ENCODE measurements at regions of chr11 and their contacts with region 1.

Region 1: DNA sequence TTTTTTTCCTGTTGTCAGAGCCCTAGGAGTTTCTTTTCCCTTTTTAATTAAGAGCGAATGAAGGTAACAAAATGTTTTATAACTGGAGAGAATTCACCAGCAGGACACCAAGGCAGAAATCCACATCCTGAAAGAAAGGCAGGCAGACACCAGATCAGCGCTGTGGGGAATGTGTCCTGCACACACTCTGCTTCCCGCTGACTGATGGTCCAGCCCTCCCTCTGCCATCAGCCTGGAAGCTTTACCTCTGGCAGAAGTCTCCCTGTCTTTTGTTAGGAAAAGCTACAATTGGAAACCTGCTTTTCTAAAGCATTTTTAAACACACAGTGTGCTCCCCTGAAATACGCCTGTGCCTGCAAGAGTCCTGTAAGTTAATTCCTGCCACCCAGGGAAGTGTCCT is 638.5 kb downstream of the NTM start:
- DNase-seq: no peak

Region 2: DNA sequence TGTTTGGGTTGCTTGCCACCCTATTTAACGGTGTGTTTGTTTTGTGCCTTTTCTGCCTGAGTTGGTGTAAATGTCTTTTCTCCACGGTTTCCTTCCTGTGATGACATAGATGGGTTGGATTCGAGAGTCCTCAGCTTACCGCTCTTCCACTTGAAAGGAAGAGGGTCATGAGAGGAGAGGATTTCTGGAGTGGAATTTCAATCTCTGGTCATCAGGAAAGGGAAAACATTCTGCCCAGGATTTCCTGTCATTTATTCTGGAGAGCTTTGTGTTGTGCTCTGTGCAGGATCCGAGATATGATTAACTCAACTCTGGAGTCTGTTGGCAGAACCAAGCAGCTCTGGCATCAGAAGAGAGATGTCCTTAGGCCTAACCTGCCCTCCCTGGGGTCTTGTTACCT is 33.3 kb before region 1 on chr11:
- intact Hi-C with region 1: loop called in 1 of 2 experiments (anchors 1 kb)
- DNase-seq: no peak

Region 3: GRCh38 chr11:133047036-133047770 is 1038.3 kb after region 1 on chr11:
- intact Hi-C with region 1: no loop called
- DNase-seq: no peak

Measured in posterior vena cava (tissue), 2 donors.